Activated T-helper 2 cell treated with anti-CD3 and anti-CD28 coated beads, Interferon-gamma antibody, Interleukin-2, Interleukin-4, amounts not matched to agents 10 μg/mL and 5 μg/mL and 100 μg/mL, durations not matched to agents 14 hours and 24 hours and 36 hours (primary cell): ENCODE measurements at regions of chr7 and their contacts with region 1.

Region 1: GRCh38 chr7:103989785-103990767 is 618 bp upstream of the RELN start:
- DNase-seq: no peak
- H3K4me3 Mint-ChIP-seq: peak overlapping the region; percentile 59
- H3K27ac Mint-ChIP-seq: no peak overlapping the region
- H3K4me1 Mint-ChIP-seq: peaks cover 6% of the 10 kb centered on the region
- H3K27me3 Mint-ChIP-seq: peaks cover 58% of the 10 kb centered on the region

Region 2: GRCh38 chr7:103447073-103447951 is 542.8 kb before region 1 on chr7:
- intact Hi-C with region 1: loop called (anchors 5 kb)
- DNase-seq: no peak
- H3K4me3 Mint-ChIP-seq: no peak overlapping the region
- H3K27ac Mint-ChIP-seq: no peak overlapping the region
- H3K4me1 Mint-ChIP-seq: peaks cover 14% of the 10 kb centered on the region
- H3K27me3 Mint-ChIP-seq: peaks cover 63% of the 10 kb centered on the region